ENCODE measurements at regions of chr2 and their contacts with region 1.

Region 1: DNA sequence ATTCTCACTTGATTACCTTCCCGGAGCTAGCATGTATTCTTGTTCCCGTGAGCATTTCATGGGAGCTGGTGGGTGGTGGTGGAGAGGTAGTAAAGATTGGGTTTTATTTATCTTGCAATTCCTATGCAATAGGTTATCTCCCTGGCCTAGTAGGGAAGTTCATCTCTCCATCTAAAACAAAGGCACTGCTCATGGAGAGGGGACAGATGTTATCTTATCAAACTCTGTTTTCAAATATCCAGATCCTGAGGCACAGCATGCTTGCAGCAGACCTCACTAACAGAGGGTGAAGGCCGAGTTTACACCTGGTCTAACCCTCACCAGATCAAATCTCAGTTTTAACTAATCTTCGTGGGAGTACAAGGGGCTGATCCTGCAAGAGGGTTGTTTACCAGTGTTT is 98.9 kb downstream of the CYRIA start:
- DNase-seq: no peak
- ATAC-seq: no peak
- H3K4me3 Mint-ChIP-seq: no peak overlapping the region
- H3K27ac Mint-ChIP-seq: no peak overlapping the region
- H3K4me1 Mint-ChIP-seq: peaks cover 2% of the 10 kb centered on the region
- H3K27me3 Mint-ChIP-seq: no peaks in the 10 kb centered on the region
- CTCF ChIP-seq: no peak

Region 2: DNA sequence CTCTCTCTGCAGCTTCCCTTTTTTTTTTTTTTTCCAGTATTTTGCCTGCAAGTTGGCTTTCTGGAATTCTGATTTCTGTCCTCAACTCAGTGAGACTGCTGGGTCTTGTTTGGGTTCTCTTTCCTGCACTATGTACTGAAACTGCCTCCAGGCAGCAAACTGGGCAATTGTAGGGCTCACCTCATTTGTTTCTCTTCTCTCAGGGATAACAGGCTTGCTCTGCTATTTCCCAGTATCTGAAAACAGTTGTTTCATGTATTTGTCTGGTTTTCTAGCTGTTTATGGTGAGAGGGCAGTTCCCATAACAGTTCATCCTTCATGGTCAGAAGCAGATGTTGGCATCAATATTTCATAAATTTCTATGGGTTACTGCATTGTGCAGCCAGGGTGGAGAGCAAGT is 107.1 kb before region 1 on chr2:
- CTCF ChIA-PET with region 1: no interaction called
- POLR2A ChIA-PET with region 1: interaction called, 10 read pairs
- intact Hi-C with region 1: no loop called
- DNase-seq: no peak
- ATAC-seq: no peak
- H3K4me3 Mint-ChIP-seq: no peak overlapping the region
- H3K27ac Mint-ChIP-seq: no peak overlapping the region
- H3K4me1 Mint-ChIP-seq: no peaks in the 10 kb centered on the region
- H3K27me3 Mint-ChIP-seq: peaks cover 12% of the 10 kb centered on the region
- CTCF ChIP-seq: no peak

Measured in activated B cell treated with CpG ODN at 0.5 μM for 24 hours (primary cell).